Dendritic cell treated with granulocyte-macrophage colony-stimulating factor and Interleukin-4, amounts not matched to agents 40 ng/mL and 50 ng/mL, for 4 days (primary cell): ENCODE measurements at regions of chr3 and their contacts with region 1.

Region 1: DNA sequence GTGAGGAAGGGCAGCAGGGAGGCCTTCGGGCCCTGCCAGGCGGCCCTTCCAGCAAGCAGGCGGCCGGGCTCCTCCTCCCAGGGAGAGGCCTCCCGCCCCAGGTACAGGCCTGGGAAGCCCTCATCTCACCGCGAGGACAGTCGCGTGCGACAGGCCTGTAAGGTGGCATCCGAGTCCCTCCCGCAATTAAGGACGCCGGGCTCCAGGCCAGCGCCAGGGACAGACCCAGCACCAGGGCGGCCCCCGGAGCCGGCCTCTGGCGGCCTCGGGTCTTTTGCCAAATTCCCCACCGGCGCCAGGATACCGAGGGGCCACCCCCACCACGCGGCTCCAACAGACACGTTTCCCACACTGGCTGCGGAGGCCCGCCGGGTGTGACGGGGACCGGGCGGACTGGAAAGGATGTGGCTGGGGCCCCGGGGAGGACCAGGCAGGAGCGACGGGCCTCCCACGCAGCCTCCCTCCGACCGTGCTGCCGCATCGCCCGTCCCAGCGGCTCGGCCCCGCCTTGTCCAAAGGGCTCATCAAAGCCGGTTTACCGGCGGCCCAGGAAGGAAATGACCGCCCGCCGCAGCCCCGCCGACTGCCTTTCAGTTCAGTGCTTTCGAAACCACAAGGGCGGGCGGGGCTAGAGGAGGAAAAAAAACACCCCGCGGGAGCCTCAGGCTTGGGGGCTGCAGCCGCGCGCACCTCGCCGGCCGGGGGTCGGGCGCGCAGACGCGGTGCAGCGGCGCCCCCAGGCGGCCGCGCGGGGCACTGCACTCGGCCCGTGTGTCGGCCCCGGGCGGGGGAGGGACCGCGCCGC is 11.3 kb downstream of the XXYLT1 start:
- H3K4me3 Mint-ChIP-seq: peak overlapping the region; percentile 69
- H3K27ac Mint-ChIP-seq: peak overlapping the region; percentile 79
- H3K4me1 Mint-ChIP-seq: peaks cover 55% of the 10 kb centered on the region
- H3K27me3 Mint-ChIP-seq: no peaks in the 10 kb centered on the region

Region 2: GRCh38 chr3:195001961-195002861 is 257.5 kb before region 1 on chr3:
- intact Hi-C with region 1: loop called (anchors 5 kb)
- H3K4me3 Mint-ChIP-seq: no peak overlapping the region
- H3K27ac Mint-ChIP-seq: no peak overlapping the region
- H3K4me1 Mint-ChIP-seq: peaks cover 60% of the 10 kb centered on the region
- H3K27me3 Mint-ChIP-seq: peaks cover 4% of the 10 kb centered on the region

Region 3: GRCh38 chr3:195106418-195106906 is 153.2 kb before region 1 on chr3:
- intact Hi-C with region 1: loop called (anchors 5 kb)
- H3K4me3 Mint-ChIP-seq: peak overlapping the region; percentile 38
- H3K27ac Mint-ChIP-seq: peak overlapping the region; percentile 28
- H3K4me1 Mint-ChIP-seq: peaks cover 48% of the 10 kb centered on the region
- H3K27me3 Mint-ChIP-seq: peaks cover 4% of the 10 kb centered on the region

Region 4: DNA sequence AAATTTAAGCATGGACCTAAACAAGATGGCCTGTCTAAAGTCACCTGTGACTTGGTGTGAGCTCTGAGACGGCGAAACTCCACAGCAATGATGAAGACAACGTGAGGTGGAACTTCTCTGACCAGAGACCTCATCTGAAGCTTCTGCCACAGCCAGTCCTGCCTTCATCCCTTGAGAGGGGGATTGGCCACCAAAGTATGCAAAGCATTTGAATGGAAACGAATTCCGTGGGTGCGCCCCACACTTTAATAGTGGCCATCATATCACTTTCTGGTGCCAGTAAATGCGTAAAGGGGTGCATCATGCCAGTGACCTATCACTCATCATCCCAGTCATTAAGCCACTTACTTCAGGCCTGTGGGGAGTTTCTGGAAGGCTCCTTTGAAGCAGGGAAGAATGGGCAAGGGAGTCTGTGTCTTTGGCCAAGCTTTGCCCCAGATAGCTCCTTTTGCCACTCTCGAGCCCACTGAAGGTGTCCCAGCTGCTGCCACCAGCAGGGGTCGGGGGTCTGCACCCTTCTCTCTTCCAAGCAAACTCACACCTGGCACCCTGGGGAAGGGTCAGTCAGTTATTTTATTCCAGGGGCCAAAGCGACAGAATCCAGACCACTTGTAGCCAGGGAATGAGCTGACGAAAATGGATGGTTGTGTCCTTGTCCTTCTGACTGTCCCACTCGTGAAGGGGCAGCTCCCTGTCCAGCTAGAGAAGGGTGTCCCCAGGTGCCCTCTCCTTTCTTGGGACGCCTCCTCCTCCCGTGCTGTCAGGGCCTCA is 478.8 kb after region 1 on chr3:
- intact Hi-C with region 1: no loop called
- H3K4me3 Mint-ChIP-seq: no peak overlapping the region
- H3K27ac Mint-ChIP-seq: no peak overlapping the region
- H3K4me1 Mint-ChIP-seq: peaks cover 7% of the 10 kb centered on the region
- H3K27me3 Mint-ChIP-seq: peaks cover 3% of the 10 kb centered on the region